ENCODE measurements at regions of chr11 and their contacts with region 1.

Region 1: DNA sequence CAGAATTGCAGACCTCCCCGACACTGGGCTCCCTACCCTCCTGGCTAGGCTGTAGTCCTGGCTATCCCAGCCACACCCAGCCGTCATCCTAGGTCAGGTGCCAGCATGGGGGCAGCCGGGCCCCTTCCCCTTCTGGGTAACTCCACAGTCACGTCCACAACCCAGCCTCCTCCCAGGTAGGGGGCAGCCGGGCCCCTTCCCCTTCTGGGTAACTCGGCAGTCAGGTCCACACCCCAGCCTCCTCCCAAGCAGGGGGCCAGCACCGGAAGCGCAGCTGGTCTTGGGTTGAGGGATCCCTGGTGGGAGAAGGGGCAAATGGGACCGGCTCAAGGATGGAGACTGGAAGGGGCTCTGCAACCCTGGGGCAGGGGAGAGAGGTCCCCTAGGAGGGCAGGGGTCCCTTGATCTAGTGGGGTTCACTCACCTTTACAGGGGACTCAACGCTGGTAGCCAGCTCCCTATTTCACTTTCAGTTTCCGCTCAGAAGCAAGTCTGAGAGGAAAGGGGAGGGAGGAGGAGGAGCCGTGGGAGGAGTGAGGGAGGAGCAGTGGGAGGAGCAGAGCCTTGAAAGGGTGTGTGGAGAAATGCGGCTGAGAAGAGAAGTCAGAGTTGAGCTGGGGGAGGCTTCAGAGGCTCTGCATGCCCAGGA is at the start of gene TRIM21:
- DNase-seq: peak; percentile 62 to 92 (median 87)
- ATAC-seq: peak; percentile 100
- H3K4me3 ChIP-seq: peak within 1 kb of the TSS; percentile 87
- H3K4me3 Mint-ChIP-seq: peak within 1 kb of the TSS; percentile 88 to 94 (median 90)
- H3K27ac ChIP-seq: peak within 1 kb of the TSS; percentile 89
- H3K27ac Mint-ChIP-seq: peak within 1 kb of the TSS; percentile 68 to 96 (median 93)
- H3K4me1 ChIP-seq: peaks cover 8 to 14% of the 10 kb centered on the region in 2 donors
- H3K4me1 Mint-ChIP-seq: peaks cover 47 to 61% (median 58%) of the 10 kb centered on the region in 7 donors
- H3K27me3 ChIP-seq: no peaks in the 10 kb centered on the region
- H3K27me3 Mint-ChIP-seq: peaks cover 0 to 8% (median 5%) of the 10 kb centered on the region in 5 donors
- total RNA-seq, gene TRIM21: 17.5 to 78.9 (median 29.7) TPM

Region 2: DNA sequence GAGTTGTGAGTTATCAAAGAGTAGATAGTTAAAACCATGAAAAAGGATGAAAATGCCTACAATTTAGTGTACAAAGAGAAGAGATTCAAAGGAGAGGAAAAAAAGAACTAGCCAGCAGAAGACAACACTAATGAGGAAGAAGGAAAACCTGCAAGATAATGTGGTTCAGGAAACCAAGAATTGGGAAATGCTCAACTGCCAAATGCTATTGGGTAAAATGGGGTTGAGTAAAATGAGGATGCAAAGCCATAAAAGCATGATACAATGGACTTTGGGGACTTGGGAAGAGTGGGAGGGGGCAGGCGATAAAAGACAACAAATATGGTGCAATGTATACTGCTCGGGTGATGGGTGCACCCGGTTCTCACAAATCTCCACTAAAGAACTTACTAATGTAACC is 48.2 kb after region 1 on chr11:
- CTCF ChIA-PET with region 1: no interaction called
- POLR2A ChIA-PET with region 1: no interaction called
- intact Hi-C with region 1: no loop called
- DNase-seq: no peak
- ATAC-seq: no peak
- H3K4me3 ChIP-seq: no peak overlapping the region
- H3K4me3 Mint-ChIP-seq: no peak overlapping the region
- H3K27ac ChIP-seq: no peak overlapping the region
- H3K27ac Mint-ChIP-seq: no peak overlapping the region
- H3K4me1 ChIP-seq: no peaks in the 10 kb centered on the region
- H3K4me1 Mint-ChIP-seq: peaks cover 0 to 1% (median 0%) of the 10 kb centered on the region in 7 donors
- H3K27me3 ChIP-seq: no peaks in the 10 kb centered on the region
- H3K27me3 Mint-ChIP-seq: peaks cover 2 to 19% (median 14%) of the 10 kb centered on the region in 5 donors

Region 3: DNA sequence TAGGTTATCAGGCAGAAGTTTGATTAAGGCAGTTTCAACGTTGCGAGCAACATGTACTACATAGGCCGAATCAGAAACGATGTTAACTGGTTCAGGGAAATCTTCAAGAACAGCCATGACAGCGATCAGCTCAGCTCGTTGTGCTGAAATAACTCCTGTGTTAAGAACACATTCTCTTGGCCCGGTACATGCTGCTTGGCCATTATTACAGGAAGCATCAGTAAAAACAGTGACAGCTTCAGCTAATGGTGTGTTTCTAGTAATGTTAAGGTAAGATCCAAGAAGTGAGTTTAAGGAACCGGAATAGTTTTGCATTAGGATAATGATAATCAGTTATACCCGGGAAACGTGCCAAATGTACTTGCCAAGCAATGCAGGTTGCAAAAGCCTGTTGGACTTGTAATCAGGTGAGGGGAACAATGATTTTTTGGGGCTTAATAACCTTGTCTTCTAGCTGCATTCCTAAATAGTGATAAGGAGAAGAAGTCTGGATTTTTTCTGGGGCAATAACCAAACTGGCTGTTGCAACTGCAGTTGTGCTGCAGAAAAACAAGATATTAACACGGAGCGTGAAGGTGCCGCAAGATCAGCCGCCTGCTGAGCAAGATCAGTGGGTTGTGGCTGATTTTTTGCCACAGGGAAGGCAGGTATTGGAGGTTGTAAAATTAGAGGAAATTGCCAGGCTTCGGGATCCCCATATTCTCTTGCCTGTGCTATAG is 103.4 kb after region 1 on chr11:
- CTCF ChIA-PET with region 1: no interaction called
- POLR2A ChIA-PET with region 1: no interaction called
- intact Hi-C with region 1: loop called in 1 of 2 experiments (anchors 5 kb)
- DNase-seq: no peak
- ATAC-seq: no peak
- H3K4me3 ChIP-seq: no peak overlapping the region
- H3K4me3 Mint-ChIP-seq: no peak overlapping the region
- H3K27ac ChIP-seq: no peak overlapping the region
- H3K27ac Mint-ChIP-seq: no peak overlapping the region
- H3K4me1 ChIP-seq: no peaks in the 10 kb centered on the region
- H3K4me1 Mint-ChIP-seq: peaks cover 0 to 7% (median 0%) of the 10 kb centered on the region in 7 donors
- H3K27me3 ChIP-seq: no peaks in the 10 kb centered on the region
- H3K27me3 Mint-ChIP-seq: peaks cover 3 to 16% (median 13%) of the 10 kb centered on the region in 5 donors

Region 4: GRCh38 chr11:4607781-4608666 is 214.7 kb after region 1 on chr11 and contains the start of gene TRIM68:
- CTCF ChIA-PET with region 1: no interaction called
- POLR2A ChIA-PET with region 1: no interaction called
- intact Hi-C with region 1: loop called (anchors 1 kb)
- DNase-seq: peak; percentile 87 to 96 (median 94)
- ATAC-seq: peak; percentile 100
- H3K4me3 ChIP-seq: peak within 1 kb of the TSS; percentile 80
- H3K4me3 Mint-ChIP-seq: peak within 1 kb of the TSS; percentile 80 to 97 (median 91)
- H3K27ac ChIP-seq: peak within 1 kb of the TSS; percentile 88
- H3K27ac Mint-ChIP-seq: peak within 1 kb of the TSS; percentile 85 to 96 (median 94)
- H3K4me1 ChIP-seq: peaks cover 15 to 22% of the 10 kb centered on the region in 2 donors
- H3K4me1 Mint-ChIP-seq: peaks cover 29 to 68% (median 56%) of the 10 kb centered on the region in 7 donors
- H3K27me3 ChIP-seq: no peaks in the 10 kb centered on the region
- H3K27me3 Mint-ChIP-seq: peaks cover 0 to 2% (median 0%) of the 10 kb centered on the region in 5 donors
- total RNA-seq, gene TRIM68: 3.8 to 29.5 (median 12.4) TPM

Measured in naive thymus-derived CD4-positive, alpha-beta T cell (primary cell).